PC-3 (cell line): ENCODE measurements at regions of chr4 and their contacts with region 1.

Region 1: DNA sequence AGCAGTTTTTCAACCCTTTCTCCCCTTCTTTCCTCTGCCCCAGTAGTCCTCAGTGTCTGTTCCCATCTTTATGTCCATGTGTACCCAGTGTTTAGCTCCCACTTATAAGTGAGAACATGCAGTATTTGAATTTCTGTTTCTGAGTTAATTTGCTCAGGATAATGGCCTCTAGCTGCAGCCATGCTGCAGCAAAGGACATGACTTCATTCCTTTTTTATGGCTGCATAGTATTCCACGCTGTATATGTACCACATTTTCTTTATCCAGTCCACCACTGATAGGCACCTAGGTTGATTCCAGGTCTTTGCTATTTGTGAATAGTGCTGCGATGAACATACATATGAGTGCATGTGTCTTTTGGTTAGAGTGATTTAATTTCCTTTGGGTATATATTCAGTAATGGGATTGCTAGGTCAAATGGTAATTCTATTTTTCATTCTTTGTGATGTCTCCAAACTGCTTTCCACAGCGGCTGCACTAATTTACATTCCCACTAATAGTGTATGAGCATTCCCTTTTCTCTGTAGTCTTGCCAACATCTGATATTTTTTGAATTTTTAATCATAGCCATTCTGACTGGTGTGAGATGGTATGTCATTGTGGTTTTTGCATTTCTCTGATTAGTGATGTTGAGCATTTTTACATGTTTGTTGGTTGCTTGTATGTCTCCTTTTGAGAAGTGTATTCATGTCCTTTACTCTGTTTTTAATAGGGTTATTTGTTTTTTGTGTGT is 54.6 kb upstream of the ANK2 start:
- DNase-seq: no peak
- ATAC-seq: no peak
- H3K4me3 ChIP-seq: no peak overlapping the region
- H3K27ac ChIP-seq: no peak overlapping the region
- H3K4me1 ChIP-seq: no peaks in the 10 kb centered on the region
- H3K27me3 ChIP-seq: no peaks in the 10 kb centered on the region
- CTCF ChIP-seq: no peak

Region 2: DNA sequence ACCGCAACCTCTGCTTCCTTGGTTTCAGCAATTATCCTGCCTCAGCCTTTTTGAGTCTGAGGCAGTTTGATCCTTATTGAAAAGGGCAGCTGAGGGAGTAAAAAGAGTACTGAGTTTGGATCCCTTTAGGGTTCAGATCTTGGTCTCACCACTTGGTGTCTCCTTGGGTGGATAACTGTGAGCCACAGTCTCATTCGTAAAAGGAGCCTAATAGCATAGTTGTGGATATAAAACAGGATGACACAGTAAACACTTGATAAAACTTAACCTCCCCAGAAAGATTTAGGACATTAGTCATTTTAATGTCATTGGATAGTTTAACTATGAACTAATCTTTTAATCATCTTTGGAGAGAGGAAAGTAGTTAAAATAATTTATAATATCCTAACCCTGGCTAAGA is 227.6 kb after region 1 on chr4:
- CTCF ChIA-PET with region 1: interaction called, 10 read pairs
- POLR2A ChIA-PET with region 1: no interaction called
- intact Hi-C with region 1: no loop called
- DNase-seq: peak; percentile 27
- ATAC-seq: peak; percentile 67
- H3K4me3 ChIP-seq: no peak overlapping the region
- H3K27ac ChIP-seq: no peak overlapping the region
- H3K4me1 ChIP-seq: no peaks in the 10 kb centered on the region; the same call in 1 of the 2 replicates
- H3K27me3 ChIP-seq: no peaks in the 10 kb centered on the region
- CTCF ChIP-seq: no peak